ENCODE measurements at regions of chr7 and their contacts with region 1.

Region 1: DNA sequence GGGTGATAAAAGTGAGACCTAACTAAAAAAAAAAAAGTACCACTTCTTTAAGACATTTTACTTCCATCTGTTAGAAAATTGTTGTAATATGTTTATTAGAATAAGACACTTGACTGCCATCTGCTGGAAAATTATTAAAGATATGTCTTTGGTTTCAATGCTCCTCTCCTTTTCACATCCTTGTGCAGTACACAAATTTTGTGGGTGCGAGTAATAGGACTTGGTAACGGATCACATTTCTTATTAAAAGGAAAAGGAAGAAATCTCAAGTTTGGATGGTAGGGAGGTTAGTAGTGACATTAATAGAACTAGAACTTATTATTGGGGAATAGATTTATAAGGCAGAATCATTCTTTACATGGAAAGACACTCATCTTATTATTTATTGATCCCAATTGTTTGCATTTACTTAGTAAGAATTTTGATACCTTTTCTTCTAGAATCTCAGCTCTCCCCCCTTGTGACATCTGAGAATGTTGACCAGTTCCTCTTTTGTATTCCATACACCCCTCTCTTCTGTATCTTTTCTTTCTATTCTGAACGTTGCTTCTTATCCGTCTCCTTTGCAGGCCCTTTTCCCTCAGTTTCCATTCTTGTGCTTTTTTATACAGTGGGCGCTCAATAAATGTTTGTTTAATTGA is 43.1 kb upstream of the RPA3 start:
- DNase-seq: no peak
- ATAC-seq: peak; percentile 33 to 66 (median 52)
- H3K4me3 ChIP-seq: peak overlapping the region in 10 of 12 donors; percentile 39 to 61 (median 52)
- H3K27ac ChIP-seq: peak overlapping the region in 11 of 12 donors; percentile 9 to 80 (median 68)
- H3K4me1 ChIP-seq: peaks cover 0 to 17% (median 8%) of the 10 kb centered on the region in 12 donors
- H3K27me3 ChIP-seq: no peaks in the 10 kb centered on the region
- CTCF ChIP-seq: peak; percentile 36 to 67 (median 54)
- POLR2A ChIP-seq: no peak

Region 2: GRCh38 chr7:7521259-7521658 is 240.2 kb before region 1 on chr7:
- intact Hi-C with region 1: no loop called
- DNase-seq: no peak
- ATAC-seq: no peak
- H3K4me3 ChIP-seq: no peak overlapping the region
- H3K27ac ChIP-seq: no peak overlapping the region
- H3K4me1 ChIP-seq: no peaks in the 10 kb centered on the region
- H3K27me3 ChIP-seq: no peaks in the 10 kb centered on the region
- CTCF ChIP-seq: no peak
- POLR2A ChIP-seq: no peak

Region 3: DNA sequence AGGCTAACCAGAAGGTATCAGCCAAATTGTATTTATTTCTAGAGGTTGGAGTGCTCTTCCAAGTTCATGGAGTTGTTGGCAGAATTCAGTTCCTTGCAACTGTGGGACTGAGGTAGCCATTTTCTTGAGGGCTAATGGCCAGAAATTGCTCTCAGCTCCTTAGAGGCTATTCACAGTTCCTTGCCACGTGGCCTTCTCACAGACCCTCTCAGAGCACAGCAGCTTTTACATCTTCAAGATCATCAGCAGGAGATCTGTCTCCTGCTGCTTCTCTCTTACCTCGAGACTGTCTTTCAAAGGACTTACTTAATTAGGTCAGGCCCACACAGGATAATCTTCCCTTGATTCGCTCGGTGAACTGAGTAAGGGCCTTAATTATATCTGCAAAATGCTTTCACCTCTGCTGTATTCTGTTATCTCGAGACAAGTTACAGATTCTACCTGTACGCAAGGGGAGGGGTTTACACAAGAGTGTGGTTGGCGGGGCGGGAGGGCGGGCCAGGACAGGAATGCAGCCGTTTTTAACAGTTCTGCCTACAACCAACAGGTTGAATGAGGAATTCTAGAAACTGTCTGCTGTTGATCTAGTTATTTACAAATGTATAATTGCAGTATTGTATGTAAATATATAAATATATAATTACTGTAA is 179.8 kb before region 1 on chr7:
- intact Hi-C with region 1: loop called in 1 of 10 experiments (anchors 10 kb)
- DNase-seq: no peak
- ATAC-seq: no peak
- H3K4me3 ChIP-seq: no peak overlapping the region
- H3K27ac ChIP-seq: no peak overlapping the region
- H3K4me1 ChIP-seq: peaks cover 0 to 15% (median 0%) of the 10 kb centered on the region in 12 donors
- H3K27me3 ChIP-seq: no peaks in the 10 kb centered on the region
- CTCF ChIP-seq: no peak
- POLR2A ChIP-seq: no peak